K562 (cell line): ENCODE measurements at regions of chr11 and their contacts with region 1.

Region 1: DNA sequence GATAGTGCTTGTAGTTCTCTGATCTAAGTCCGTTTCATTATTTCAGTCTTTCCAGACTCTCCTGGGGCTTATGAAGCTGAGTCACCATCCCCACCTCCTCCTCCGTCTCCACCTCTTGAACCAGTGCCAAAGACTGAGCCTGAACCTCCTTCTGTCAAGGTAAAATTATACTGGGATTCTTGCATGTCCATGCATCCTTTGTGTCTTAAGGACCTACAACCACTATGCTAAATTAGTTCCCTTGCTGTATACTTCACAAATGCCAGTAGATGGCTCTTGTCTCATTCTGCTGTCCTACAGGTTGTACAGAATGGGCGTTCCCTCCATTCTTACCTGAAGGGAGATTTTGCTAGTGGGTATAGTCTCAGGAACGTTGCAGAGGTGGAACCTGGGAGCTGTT is 42.2 kb downstream of the POLD3 start:
- DNase-seq: peak; percentile 32 to 68 (median 50)
- ATAC-seq: peak; percentile 93
- H3K4me3 ChIP-seq: no peak overlapping the region
- H3K27ac ChIP-seq: no peak overlapping the region
- H3K4me1 ChIP-seq: peaks cover 0 to 13% of the 10 kb centered on the region in 2 experiments; a peak in 4 of 5 replicates
- H3K27me3 ChIP-seq: no peaks in the 10 kb centered on the region
- CTCF ChIP-seq: peak; percentile 53 to 68 (median 62)
- EP300 ChIP-seq: no peak
- POLR2A ChIP-seq: no peak
- RAD21 ChIP-seq: peak in 1 of 2 experiments; percentile 67; a peak in 3 of 4 replicates

Region 2: DNA sequence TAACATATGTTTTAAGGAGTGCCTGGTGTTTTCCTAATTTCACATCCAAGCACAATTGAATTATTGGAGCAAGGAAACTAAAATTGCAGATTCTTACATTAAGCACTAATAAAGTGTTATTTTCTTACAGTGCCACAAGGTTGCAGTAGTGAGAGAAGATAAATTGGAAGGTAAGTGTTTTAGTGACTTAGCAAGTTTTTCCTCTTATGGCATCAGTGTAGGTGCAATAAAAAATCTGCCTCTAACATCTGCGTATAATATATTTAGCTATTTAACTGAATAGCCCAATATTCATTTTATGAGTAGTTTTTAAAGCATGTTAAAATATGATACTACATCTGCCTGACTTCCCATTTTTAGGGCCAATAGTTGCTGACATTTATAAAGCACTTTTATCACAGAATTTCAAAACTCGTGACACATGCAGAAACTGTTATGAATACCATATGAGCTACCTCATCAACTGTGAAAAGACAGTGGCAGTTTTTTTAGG is 23.1 kb before region 1 on chr11:
- CTCF ChIA-PET with region 1: no interaction called
- POLR2A ChIA-PET with region 1: interaction called, 10 read pairs
- in situ Hi-C with region 1: no loop called
- intact Hi-C with region 1: no loop called
- DNase-seq: peak in 1 of 4 experiments; percentile 48
- ATAC-seq: peak; percentile 73
- H3K4me3 ChIP-seq: no peak overlapping the region
- H3K27ac ChIP-seq: no peak overlapping the region
- H3K4me1 ChIP-seq: peaks cover 0 to 2% of the 10 kb centered on the region in 2 experiments; a peak in 1 of 5 replicates
- H3K27me3 ChIP-seq: no peaks in the 10 kb centered on the region
- CTCF ChIP-seq: peak in 2 of 3 experiments; percentile 49 to 57; a peak in 4 of 6 replicates
- EP300 ChIP-seq: no peak
- POLR2A ChIP-seq: no peak
- RAD21 ChIP-seq: peak; percentile 31 to 60

Region 3: GRCh38 chr11:74687237-74688023 is 52.9 kb after region 1 on chr11:
- CTCF ChIA-PET with region 1: no interaction called
- POLR2A ChIA-PET with region 1: no interaction called
- in situ Hi-C with region 1: loop called (anchors 5 kb)
- intact Hi-C with region 1: no loop called
- DNase-seq: peak in 1 of 4 experiments; percentile 53
- ATAC-seq: peak; percentile 64
- H3K4me3 ChIP-seq: no peak overlapping the region
- H3K27ac ChIP-seq: no peak overlapping the region
- H3K4me1 ChIP-seq: no peaks in the 10 kb centered on the region; a peak in 2 of 5 replicates
- H3K27me3 ChIP-seq: peaks cover 0 to 4% of the 10 kb centered on the region in 2 experiments; a peak in 1 of 5 replicates
- CTCF ChIP-seq: no peak
- EP300 ChIP-seq: no peak
- POLR2A ChIP-seq: no peak
- RAD21 ChIP-seq: no peak

Region 4: DNA sequence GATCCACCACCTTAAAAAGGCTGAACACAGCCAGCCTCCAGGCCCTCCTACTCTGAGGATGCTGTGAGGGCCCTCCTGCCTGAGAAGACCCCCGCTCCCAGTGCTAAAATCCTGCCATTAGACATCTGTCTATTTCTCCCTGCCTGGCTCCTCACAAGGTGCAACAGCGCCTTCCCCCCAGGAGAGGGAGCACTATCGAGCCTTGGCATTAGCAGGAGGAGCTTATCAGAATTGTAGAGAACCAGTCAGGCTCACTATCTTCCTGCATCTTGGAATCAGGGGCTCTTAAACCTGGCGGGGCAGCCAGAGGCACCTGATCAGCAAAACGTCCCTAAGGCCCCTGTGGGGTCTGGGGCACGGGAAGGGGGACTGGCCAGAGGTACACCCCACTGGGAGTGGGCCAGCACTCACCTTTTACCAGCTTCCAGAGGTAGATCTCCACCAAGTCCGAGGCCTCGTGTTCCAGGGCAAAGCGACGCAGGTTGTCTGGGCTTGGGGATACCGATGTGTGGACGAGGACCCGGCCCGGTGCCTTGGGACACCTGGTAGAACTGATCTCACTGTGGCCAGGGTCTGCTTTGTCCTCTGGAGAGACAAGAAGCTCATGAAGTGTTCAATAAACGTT is 68.0 kb after region 1 on chr11:
- CTCF ChIA-PET with region 1: no interaction called
- POLR2A ChIA-PET with region 1: no interaction called
- in situ Hi-C with region 1: no loop called
- intact Hi-C with region 1: loop called (anchors 5 kb)
- DNase-seq: peak; percentile 79 to 85 (median 84)
- ATAC-seq: peak; percentile 88
- H3K4me3 ChIP-seq: no peak overlapping the region
- H3K27ac ChIP-seq: no peak overlapping the region
- H3K4me1 ChIP-seq: peaks cover 6 to 12% of the 10 kb centered on the region in 2 experiments; a peak in 3 of 5 replicates
- H3K27me3 ChIP-seq: no peaks in the 10 kb centered on the region
- CTCF ChIP-seq: peak; percentile 91 to 95 (median 92)
- EP300 ChIP-seq: no peak
- POLR2A ChIP-seq: no peak
- RAD21 ChIP-seq: peak; percentile 57 to 77

Region 5: GRCh38 chr11:74726547-74727182 is 92.1 kb after region 1 on chr11:
- CTCF ChIA-PET with region 1: no interaction called
- POLR2A ChIA-PET with region 1: no interaction called
- in situ Hi-C with region 1: no loop called
- intact Hi-C with region 1: loop called (anchors 2 kb)
- DNase-seq: peak; percentile 79 to 83 (median 80)
- ATAC-seq: peak; percentile 99
- H3K4me3 ChIP-seq: no peak overlapping the region
- H3K27ac ChIP-seq: no peak overlapping the region
- H3K4me1 ChIP-seq: peaks cover 0 to 10% of the 10 kb centered on the region in 2 experiments; a peak in 1 of 5 replicates
- H3K27me3 ChIP-seq: peaks cover 52 to 59% of the 10 kb centered on the region in 2 experiments
- CTCF ChIP-seq: peak; percentile 90 to 94 (median 91)
- EP300 ChIP-seq: no peak
- POLR2A ChIP-seq: no peak
- RAD21 ChIP-seq: peak; percentile 77 to 90

Region 6: GRCh38 chr11:74860743-74861142 is 226.2 kb after region 1 on chr11:
- CTCF ChIA-PET with region 1: no interaction called
- POLR2A ChIA-PET with region 1: no interaction called
- in situ Hi-C with region 1: no loop called
- intact Hi-C with region 1: no loop called
- DNase-seq: no peak
- ATAC-seq: no peak
- H3K4me3 ChIP-seq: no peak overlapping the region
- H3K27ac ChIP-seq: no peak overlapping the region
- H3K4me1 ChIP-seq: no peaks in the 10 kb centered on the region
- H3K27me3 ChIP-seq: no peaks in the 10 kb centered on the region
- CTCF ChIP-seq: no peak
- EP300 ChIP-seq: no peak
- POLR2A ChIP-seq: no peak
- RAD21 ChIP-seq: no peak